PC-3 (cell line): ENCODE measurements at regions of chr19 and their contacts with region 1.

Region 1: DNA sequence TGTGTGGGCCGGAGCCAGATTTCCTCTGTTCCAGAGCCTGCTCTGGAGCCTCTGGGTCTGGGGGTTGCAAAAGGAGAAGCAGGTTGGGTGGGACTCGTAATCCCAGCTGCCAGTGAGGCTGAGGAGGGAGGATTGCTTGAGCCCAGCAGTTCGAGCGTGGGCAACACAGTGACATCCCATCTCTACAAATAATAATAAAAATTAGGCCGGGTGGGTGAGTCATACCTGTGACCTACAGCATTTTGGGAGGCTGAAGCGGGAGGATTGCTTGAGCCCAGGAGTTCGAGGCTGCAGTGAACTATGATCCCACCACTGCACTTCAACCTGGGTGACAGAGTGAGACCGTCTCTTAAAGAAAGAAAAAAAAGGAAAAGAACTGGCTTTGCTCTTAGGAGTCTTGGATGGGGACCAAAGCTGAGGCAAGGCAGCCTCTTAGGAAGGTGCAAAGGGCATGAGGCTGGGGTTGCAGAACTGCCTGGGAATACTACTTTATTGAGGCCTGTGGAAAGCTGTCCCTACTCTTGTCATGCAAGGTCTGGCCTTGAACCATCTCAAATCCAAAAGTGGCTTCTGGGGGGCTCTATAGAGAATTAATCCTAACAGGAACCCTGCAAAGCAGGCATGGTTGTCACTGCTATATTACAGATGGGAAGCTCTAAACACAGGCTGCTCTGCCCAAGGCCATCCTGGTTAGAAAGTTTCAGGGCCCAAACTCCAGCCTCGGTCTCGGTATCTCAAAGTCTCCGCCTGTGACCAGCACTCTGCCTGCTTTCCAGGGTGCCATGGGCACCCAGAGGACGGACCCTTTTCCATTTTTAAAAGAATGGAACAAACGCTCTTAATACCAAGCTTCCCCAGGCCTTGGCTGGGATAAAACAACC is 880 bp upstream of the C19orf12 start:
- DNase-seq: peak; percentile 31
- ATAC-seq: peak; percentile 33
- H3K4me3 ChIP-seq: peak overlapping the region; percentile 80
- H3K27ac ChIP-seq: peak overlapping the region; percentile 54
- H3K4me1 ChIP-seq: peaks cover 10% of the 10 kb centered on the region
- H3K27me3 ChIP-seq: no peaks in the 10 kb centered on the region
- CTCF ChIP-seq: no peak

Region 2: GRCh38 chr19:29610563-29611271 is 105.2 kb before region 1 on chr19:
- CTCF ChIA-PET with region 1: no interaction called
- POLR2A ChIA-PET with region 1: interaction called, 3 read pairs
- intact Hi-C with region 1: loop called (anchors 1 kb)
- DNase-seq: peak; percentile 70
- ATAC-seq: peak; percentile 85
- H3K4me3 ChIP-seq: no peak overlapping the region
- H3K27ac ChIP-seq: no peak overlapping the region
- H3K4me1 ChIP-seq: peaks cover 3% of the 10 kb centered on the region; the same call in 1 of the 2 replicates
- H3K27me3 ChIP-seq: no peaks in the 10 kb centered on the region
- CTCF ChIP-seq: peak; percentile 82

Region 3: GRCh38 chr19:29741786-29742185 is 25.8 kb after region 1 on chr19:
- CTCF ChIA-PET with region 1: no interaction called
- POLR2A ChIA-PET with region 1: no interaction called
- intact Hi-C with region 1: no loop called
- DNase-seq: no peak
- ATAC-seq: no peak
- H3K4me3 ChIP-seq: no peak overlapping the region
- H3K27ac ChIP-seq: no peak overlapping the region
- H3K4me1 ChIP-seq: no peaks in the 10 kb centered on the region
- H3K27me3 ChIP-seq: peaks cover 16% of the 10 kb centered on the region; the same call in 1 of the 2 replicates
- CTCF ChIP-seq: no peak